A673 (cell line): ENCODE measurements at regions of chr6 and their contacts with region 1.

Region 1: DNA sequence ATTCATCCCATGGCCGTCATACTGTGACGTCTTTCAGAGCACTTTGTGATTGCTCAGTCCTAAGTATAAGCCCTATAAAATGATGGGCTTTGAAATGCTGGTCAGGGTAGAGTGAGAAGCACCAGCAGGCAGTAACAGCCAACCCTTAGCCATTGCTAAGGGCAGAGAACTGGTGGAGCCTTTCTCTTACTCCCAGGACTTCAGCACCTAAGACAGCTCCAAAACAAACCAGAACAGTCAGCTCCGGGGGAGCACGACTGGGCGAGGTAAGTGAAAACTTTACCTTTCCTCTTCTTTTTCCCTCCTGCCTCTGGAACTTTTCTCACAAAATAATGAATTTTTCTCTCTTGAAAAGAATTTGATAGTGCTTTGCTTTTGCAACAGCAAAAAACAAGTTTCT is at the start of gene VIP:
- DNase-seq: peak; percentile 56
- H3K4me3 ChIP-seq: no peak within 1 kb of the TSS
- H3K27ac ChIP-seq: no peak within 1 kb of the TSS
- H3K4me1 ChIP-seq: no peaks in the 10 kb centered on the region
- H3K27me3 ChIP-seq: peaks cover 6% of the 10 kb centered on the region
- CTCF ChIP-seq: no peak
- total RNA-seq, gene VIP: not detected in 2 replicates

Region 2: GRCh38 chr6:152575621-152576150 is 175.0 kb before region 1 on chr6:
- CTCF ChIA-PET with region 1: no interaction called
- POLR2A ChIA-PET with region 1: no interaction called
- intact Hi-C with region 1: no loop called
- DNase-seq: peak; percentile 73
- H3K4me3 ChIP-seq: no peak overlapping the region
- H3K27ac ChIP-seq: peak overlapping the region; percentile 80
- H3K4me1 ChIP-seq: peaks cover 57% of the 10 kb centered on the region
- H3K27me3 ChIP-seq: no peaks in the 10 kb centered on the region
- CTCF ChIP-seq: no peak

Region 3: GRCh38 chr6:152723398-152723797 is 27.3 kb before region 1 on chr6:
- CTCF ChIA-PET with region 1: no interaction called
- POLR2A ChIA-PET with region 1: no interaction called
- intact Hi-C with region 1: no loop called
- DNase-seq: no peak
- H3K4me3 ChIP-seq: no peak overlapping the region
- H3K27ac ChIP-seq: no peak overlapping the region
- H3K4me1 ChIP-seq: no peaks in the 10 kb centered on the region
- H3K27me3 ChIP-seq: no peaks in the 10 kb centered on the region
- CTCF ChIP-seq: no peak

Region 4: DNA sequence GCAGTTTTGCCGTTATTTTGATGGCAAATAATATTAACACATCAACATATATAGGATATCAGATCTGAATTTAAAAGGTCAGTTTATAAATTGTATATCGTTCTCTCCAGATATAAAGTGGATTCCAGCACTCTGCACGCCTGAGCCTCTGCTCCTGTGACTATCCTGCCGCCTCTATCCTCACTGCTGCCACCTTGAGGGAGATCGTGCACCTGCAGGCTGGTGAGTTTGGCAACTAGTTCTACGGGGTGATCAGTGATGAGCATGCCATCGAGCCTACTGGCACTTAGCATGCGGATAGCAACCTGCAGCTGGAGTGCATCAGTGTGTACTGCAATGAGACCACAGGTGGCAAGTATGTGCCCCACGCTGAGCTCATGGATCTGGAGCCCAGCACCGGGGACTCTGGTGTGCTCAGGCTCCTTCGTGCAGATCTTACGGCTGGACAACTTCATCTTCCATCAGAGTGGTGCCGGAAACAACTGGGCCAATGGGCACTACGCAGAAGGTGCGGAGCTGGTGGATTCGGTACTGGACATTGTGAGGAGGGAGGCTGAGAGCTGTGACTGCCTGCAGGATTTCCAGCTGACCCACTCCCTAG is 147.2 kb after region 1 on chr6:
- CTCF ChIA-PET with region 1: no interaction called
- POLR2A ChIA-PET with region 1: no interaction called
- intact Hi-C with region 1: loop called (anchors 5 kb)
- DNase-seq: peak; percentile 77
- H3K4me3 ChIP-seq: no peak overlapping the region
- H3K27ac ChIP-seq: no peak overlapping the region
- H3K4me1 ChIP-seq: no peaks in the 10 kb centered on the region
- H3K27me3 ChIP-seq: peaks cover 36% of the 10 kb centered on the region
- CTCF ChIP-seq: peak; percentile 90

Region 5: GRCh38 chr6:153023977-153024708 is 273.4 kb after region 1 on chr6:
- CTCF ChIA-PET with region 1: no interaction called
- POLR2A ChIA-PET with region 1: no interaction called
- intact Hi-C with region 1: loop called (anchors 2 kb)
- DNase-seq: peak; percentile 72
- H3K4me3 ChIP-seq: no peak overlapping the region
- H3K27ac ChIP-seq: no peak overlapping the region
- H3K4me1 ChIP-seq: no peaks in the 10 kb centered on the region
- H3K27me3 ChIP-seq: no peaks in the 10 kb centered on the region
- CTCF ChIP-seq: peak; percentile 84

Region 6: DNA sequence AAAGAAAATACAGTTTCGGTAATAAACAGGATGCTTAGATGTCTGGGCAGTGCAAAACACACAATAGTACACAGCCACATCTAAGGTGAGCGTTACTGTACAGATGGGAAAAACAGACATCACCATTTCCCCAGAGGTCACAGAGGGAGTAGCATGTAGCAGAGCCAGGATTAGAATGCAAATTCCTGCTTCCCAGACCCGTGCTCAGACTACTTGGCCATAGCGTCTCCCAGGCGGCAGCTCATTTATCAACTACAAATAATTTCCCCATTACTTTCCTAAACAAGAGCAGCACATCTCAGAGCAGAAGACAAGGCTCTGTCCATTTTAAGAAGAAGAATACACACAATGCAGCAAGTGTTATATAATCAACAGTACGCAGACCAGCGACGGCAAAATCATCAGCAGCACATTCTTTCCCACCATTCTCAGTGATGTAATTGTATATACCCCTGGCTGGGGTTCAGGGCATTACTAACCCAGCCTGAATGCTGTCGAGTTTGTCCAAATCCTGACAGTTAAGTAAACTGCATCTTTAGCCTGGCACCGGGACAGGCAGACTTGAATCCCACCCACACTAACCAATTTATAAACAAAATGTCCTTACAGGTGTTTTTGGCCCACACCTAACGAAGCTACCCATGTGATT is 1697.9 kb after region 1 on chr6:
- CTCF ChIA-PET with region 1: no interaction called
- POLR2A ChIA-PET with region 1: no interaction called
- intact Hi-C with region 1: no loop called
- DNase-seq: peak; percentile 38
- H3K4me3 ChIP-seq: no peak overlapping the region
- H3K27ac ChIP-seq: no peak overlapping the region
- H3K4me1 ChIP-seq: peaks cover 39% of the 10 kb centered on the region
- H3K27me3 ChIP-seq: no peaks in the 10 kb centered on the region
- CTCF ChIP-seq: no peak; the same call in 1 of the 2 replicates